Endothelial cell of umbilical vein (primary cell): ENCODE measurements at regions of chr4 and their contacts with region 1.

Region 1: GRCh38 chr4:22389240-22389870 is 126.5 kb downstream of the ADGRA3 start:
- DNase-seq: peak; percentile 78
- H3K4me3 ChIP-seq: no peak overlapping the region
- H3K27ac ChIP-seq: no peak overlapping the region
- H3K4me1 ChIP-seq: peaks cover 18% of the 10 kb centered on the region
- H3K27me3 ChIP-seq: no peaks in the 10 kb centered on the region
- CTCF ChIP-seq: peak; percentile 71
- POLR2A ChIP-seq: no peak

Region 2: GRCh38 chr4:21802406-21802805 is 586.9 kb before region 1 on chr4:
- CTCF ChIA-PET with region 1: interaction called, 26 read pairs
- POLR2A ChIA-PET with region 1: no interaction called
- dilution Hi-C with region 1: loop called (anchors 25 kb)
- intact Hi-C with region 1: no loop called
- DNase-seq: peak; percentile 89
- H3K4me3 ChIP-seq: peak overlapping the region in 1 of 3 experiments; percentile 32
- H3K27ac ChIP-seq: peak overlapping the region; percentile 92
- H3K4me1 ChIP-seq: peaks cover 17% of the 10 kb centered on the region
- H3K27me3 ChIP-seq: no peaks in the 10 kb centered on the region
- CTCF ChIP-seq: no peak
- POLR2A ChIP-seq: no peak

Region 3: DNA sequence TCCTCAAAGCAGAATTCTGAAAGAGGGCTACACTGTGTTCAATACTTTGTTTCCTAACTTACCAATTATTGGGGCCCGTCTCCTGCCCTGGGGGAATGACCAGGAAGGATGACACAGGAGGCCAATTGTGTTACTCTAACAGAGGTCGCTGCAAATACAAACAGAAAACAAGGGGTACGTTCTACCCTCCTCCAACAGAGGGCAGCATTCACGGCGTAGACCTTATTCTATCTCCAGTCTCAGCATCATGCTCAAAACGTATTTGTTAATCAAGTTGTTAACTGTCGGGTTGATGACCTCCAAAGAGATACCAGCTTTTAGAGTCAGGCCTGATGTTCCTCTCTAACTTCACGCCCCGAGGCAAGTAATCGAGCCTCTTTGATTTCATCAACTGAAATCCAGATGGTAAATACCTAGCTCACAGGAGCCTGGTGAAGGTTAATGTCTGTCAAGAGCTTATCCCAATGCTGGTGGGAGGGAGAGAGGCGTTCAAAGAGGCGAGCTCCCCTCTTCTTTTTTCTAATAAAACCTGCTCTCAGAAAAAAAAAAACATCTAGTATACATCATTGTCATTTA is 259.8 kb before region 1 on chr4:
- CTCF ChIA-PET with region 1: interaction called, 12 read pairs
- POLR2A ChIA-PET with region 1: no interaction called
- dilution Hi-C with region 1: no loop called
- intact Hi-C with region 1: no loop called
- DNase-seq: no peak
- H3K4me3 ChIP-seq: no peak overlapping the region
- H3K27ac ChIP-seq: no peak overlapping the region
- H3K4me1 ChIP-seq: no peaks in the 10 kb centered on the region
- H3K27me3 ChIP-seq: no peaks in the 10 kb centered on the region
- CTCF ChIP-seq: peak in 1 of 2 donors; percentile 8
- POLR2A ChIP-seq: no peak

Region 4: GRCh38 chr4:22187203-22187835 is 202.0 kb before region 1 on chr4:
- CTCF ChIA-PET with region 1: no interaction called
- POLR2A ChIA-PET with region 1: no interaction called
- dilution Hi-C with region 1: no loop called
- intact Hi-C with region 1: no loop called
- DNase-seq: no peak
- H3K4me3 ChIP-seq: no peak overlapping the region
- H3K27ac ChIP-seq: no peak overlapping the region
- H3K4me1 ChIP-seq: no peaks in the 10 kb centered on the region
- H3K27me3 ChIP-seq: no peaks in the 10 kb centered on the region
- CTCF ChIP-seq: no peak
- POLR2A ChIP-seq: no peak

Region 5: GRCh38 chr4:22369901-22370562 is 19.3 kb before region 1 on chr4:
- CTCF ChIA-PET with region 1: interaction called, 19 read pairs
- POLR2A ChIA-PET with region 1: no interaction called
- dilution Hi-C with region 1: no loop called
- intact Hi-C with region 1: no loop called
- DNase-seq: no peak
- H3K4me3 ChIP-seq: no peak overlapping the region
- H3K27ac ChIP-seq: no peak overlapping the region
- H3K4me1 ChIP-seq: no peaks in the 10 kb centered on the region
- H3K27me3 ChIP-seq: no peaks in the 10 kb centered on the region
- CTCF ChIP-seq: no peak
- POLR2A ChIP-seq: no peak

Region 6: DNA sequence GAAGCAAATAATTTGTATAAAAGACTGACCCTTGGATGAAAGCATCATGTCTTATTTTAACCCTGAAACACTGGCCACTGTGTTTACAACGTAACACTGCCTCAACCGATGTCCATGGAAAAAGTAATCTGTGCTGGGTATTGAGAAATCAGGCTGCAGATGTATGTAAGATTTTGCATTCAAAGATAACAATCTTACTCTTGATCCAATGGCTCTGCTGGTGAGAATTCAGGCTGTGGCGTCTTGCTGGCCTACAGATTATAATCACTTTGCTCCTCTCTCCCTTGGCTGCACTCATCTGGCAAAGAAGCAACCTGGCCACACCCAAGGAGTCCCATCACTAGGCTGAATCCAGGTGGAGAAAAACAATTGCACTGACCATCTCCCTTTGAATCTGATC is 119.0 kb after region 1 on chr4:
- CTCF ChIA-PET with region 1: no interaction called
- POLR2A ChIA-PET with region 1: no interaction called
- dilution Hi-C with region 1: no loop called
- intact Hi-C with region 1: no loop called
- DNase-seq: no peak
- H3K4me3 ChIP-seq: no peak overlapping the region
- H3K27ac ChIP-seq: no peak overlapping the region
- H3K4me1 ChIP-seq: no peaks in the 10 kb centered on the region
- H3K27me3 ChIP-seq: no peaks in the 10 kb centered on the region
- CTCF ChIP-seq: no peak
- POLR2A ChIP-seq: no peak

Region 7: GRCh38 chr4:22688236-22688635 is 298.9 kb after region 1 on chr4:
- CTCF ChIA-PET with region 1: interaction called, 5 read pairs
- POLR2A ChIA-PET with region 1: no interaction called
- dilution Hi-C with region 1: no loop called
- intact Hi-C with region 1: loop called (anchors 5 kb)
- DNase-seq: no peak
- H3K4me3 ChIP-seq: no peak overlapping the region
- H3K27ac ChIP-seq: no peak overlapping the region
- H3K4me1 ChIP-seq: no peaks in the 10 kb centered on the region
- H3K27me3 ChIP-seq: no peaks in the 10 kb centered on the region
- CTCF ChIP-seq: no peak
- POLR2A ChIP-seq: no peak